CD4-positive, alpha-beta memory T cell (primary cell): ENCODE measurements at regions of chr6 and their contacts with region 1.

Region 1: DNA sequence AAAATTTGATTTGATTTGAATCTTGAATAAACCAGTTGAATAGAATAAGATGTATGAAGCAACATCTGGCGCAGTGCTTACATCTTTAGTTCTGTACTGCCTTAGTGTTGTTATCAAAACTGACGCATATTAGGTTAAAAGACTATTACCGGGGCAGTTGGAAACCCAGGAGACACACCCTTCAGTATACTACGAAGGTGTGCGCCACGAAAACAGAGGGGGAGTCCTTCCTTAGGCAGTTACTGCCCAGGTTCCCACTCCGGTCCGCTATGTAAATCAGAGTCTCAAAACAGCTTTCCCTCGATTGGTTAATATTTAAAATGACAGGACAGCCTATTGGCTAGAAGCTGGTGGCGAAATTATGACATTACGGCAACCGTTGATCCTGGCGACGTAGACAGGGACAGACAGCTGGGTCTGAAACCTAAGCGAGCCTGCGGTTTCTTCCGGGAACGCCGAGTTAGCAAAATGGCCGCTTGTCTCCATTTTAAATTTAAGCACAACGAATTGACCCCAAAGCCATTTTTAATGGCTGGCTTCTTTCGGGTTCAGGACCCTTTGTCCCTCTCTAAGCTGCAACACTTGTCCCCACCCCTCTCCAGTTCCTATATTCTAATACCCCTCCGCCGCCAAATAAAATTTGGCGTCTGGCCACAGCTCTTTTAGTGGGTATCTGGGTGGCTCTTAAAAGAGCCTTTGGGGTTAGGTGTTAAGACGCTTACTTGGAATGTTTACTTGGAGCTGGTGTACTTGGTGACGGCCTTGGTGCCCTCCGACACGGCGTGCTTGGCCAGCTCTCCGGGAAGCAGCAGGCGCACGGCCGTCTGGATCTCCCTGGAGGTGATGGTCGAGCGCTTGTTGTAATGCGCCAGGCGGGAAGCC is 35.8 kb downstream of the HFE start:
- DNase-seq: peak; percentile 94 to 98 (median 98)
- H3K4me3 ChIP-seq: peak overlapping the region; percentile 87 to 98
- H3K4me3 Mint-ChIP-seq: peak overlapping the region; percentile 96 to 100 (median 100)
- H3K27ac ChIP-seq: peak overlapping the region; percentile 89
- H3K27ac Mint-ChIP-seq: peak overlapping the region; percentile 97 to 99 (median 99)
- H3K4me1 ChIP-seq: peaks cover 26% of the 10 kb centered on the region
- H3K4me1 Mint-ChIP-seq: peaks cover 20 to 54% (median 30%) of the 10 kb centered on the region in 4 donors
- H3K27me3 ChIP-seq: no peaks in the 10 kb centered on the region
- H3K27me3 Mint-ChIP-seq: peaks cover 0 to 3% of the 10 kb centered on the region in 2 donors

Region 2: GRCh38 chr6:26065952-26066380 is 57.1 kb before region 1 on chr6:
- CTCF ChIA-PET with region 1: interaction called, 3 read pairs
- POLR2A ChIA-PET with region 1: interaction called, 69 read pairs
- intact Hi-C with region 1: loop called (anchors 2 kb)
- DNase-seq: peak; percentile 70 to 76 (median 71)
- H3K4me3 ChIP-seq: no peak overlapping the region
- H3K4me3 Mint-ChIP-seq: no peak overlapping the region
- H3K27ac ChIP-seq: no peak overlapping the region
- H3K27ac Mint-ChIP-seq: peak overlapping the region in 1 of 7 donors; percentile 30
- H3K4me1 ChIP-seq: no peaks in the 10 kb centered on the region
- H3K4me1 Mint-ChIP-seq: peaks cover 4 to 12% (median 7%) of the 10 kb centered on the region in 4 donors
- H3K27me3 ChIP-seq: no peaks in the 10 kb centered on the region
- H3K27me3 Mint-ChIP-seq: peaks cover 0 to 4% of the 10 kb centered on the region in 2 donors

Region 3: DNA sequence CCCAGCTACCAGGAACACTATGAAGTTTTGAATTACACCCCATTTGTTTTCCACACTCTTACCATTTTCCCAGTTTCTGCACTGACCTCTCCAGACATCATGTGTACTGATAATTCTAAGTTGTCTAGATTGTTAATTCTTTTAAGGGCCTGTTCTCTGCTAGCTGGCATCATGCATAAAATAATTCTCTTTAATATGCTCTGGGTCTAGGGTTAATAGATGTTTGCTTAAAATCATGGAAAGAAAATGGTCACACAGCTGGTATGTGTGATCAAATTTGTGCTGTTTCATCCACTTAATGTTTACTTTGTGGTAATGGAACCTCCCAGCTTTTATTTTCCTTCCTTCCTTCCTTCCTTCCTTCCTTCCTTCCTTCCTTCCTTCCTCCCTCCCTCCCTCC is 13.3 kb after region 1 on chr6:
- CTCF ChIA-PET with region 1: interaction called, 3 read pairs
- POLR2A ChIA-PET with region 1: interaction called, 90 read pairs
- intact Hi-C with region 1: loop called (anchors 1 kb)
- DNase-seq: no peak
- H3K4me3 ChIP-seq: no peak overlapping the region
- H3K4me3 Mint-ChIP-seq: no peak overlapping the region
- H3K27ac ChIP-seq: no peak overlapping the region
- H3K27ac Mint-ChIP-seq: peak overlapping the region in 2 of 7 donors; percentile 0 to 51
- H3K4me1 ChIP-seq: peaks cover 5% of the 10 kb centered on the region
- H3K4me1 Mint-ChIP-seq: peaks cover 20 to 46% (median 28%) of the 10 kb centered on the region in 4 donors
- H3K27me3 ChIP-seq: no peaks in the 10 kb centered on the region
- H3K27me3 Mint-ChIP-seq: no peaks in the 10 kb centered on the region

Region 4: GRCh38 chr6:26196846-26197648 is 74.0 kb after region 1 on chr6:
- CTCF ChIA-PET with region 1: interaction called, 32 read pairs
- POLR2A ChIA-PET with region 1: interaction called, 657 read pairs
- intact Hi-C with region 1: loop called (anchors 1 kb)
- DNase-seq: peak; percentile 92 to 93 (median 92)
- H3K4me3 ChIP-seq: peak overlapping the region; percentile 83 to 97
- H3K4me3 Mint-ChIP-seq: peak overlapping the region; percentile 94 to 99 (median 97)
- H3K27ac ChIP-seq: peak overlapping the region; percentile 84
- H3K27ac Mint-ChIP-seq: peak overlapping the region; percentile 96 to 100 (median 98)
- H3K4me1 ChIP-seq: peaks cover 43% of the 10 kb centered on the region
- H3K4me1 Mint-ChIP-seq: peaks cover 23 to 57% (median 41%) of the 10 kb centered on the region in 4 donors
- H3K27me3 ChIP-seq: no peaks in the 10 kb centered on the region
- H3K27me3 Mint-ChIP-seq: no peaks in the 10 kb centered on the region

Region 5: GRCh38 chr6:26249957-26250697 is 127.1 kb after region 1 on chr6:
- CTCF ChIA-PET with region 1: interaction called, 7 read pairs
- POLR2A ChIA-PET with region 1: interaction called, 94 read pairs
- intact Hi-C with region 1: no loop called
- DNase-seq: peak; percentile 79 to 88 (median 83)
- H3K4me3 ChIP-seq: peak overlapping the region; percentile 86 to 88
- H3K4me3 Mint-ChIP-seq: peak overlapping the region; percentile 92 to 99 (median 98)
- H3K27ac ChIP-seq: peak overlapping the region; percentile 59
- H3K27ac Mint-ChIP-seq: peak overlapping the region; percentile 85 to 97 (median 94)
- H3K4me1 ChIP-seq: peaks cover 25% of the 10 kb centered on the region
- H3K4me1 Mint-ChIP-seq: peaks cover 28 to 53% (median 40%) of the 10 kb centered on the region in 4 donors
- H3K27me3 ChIP-seq: no peaks in the 10 kb centered on the region
- H3K27me3 Mint-ChIP-seq: no peaks in the 10 kb centered on the region

Region 6: DNA sequence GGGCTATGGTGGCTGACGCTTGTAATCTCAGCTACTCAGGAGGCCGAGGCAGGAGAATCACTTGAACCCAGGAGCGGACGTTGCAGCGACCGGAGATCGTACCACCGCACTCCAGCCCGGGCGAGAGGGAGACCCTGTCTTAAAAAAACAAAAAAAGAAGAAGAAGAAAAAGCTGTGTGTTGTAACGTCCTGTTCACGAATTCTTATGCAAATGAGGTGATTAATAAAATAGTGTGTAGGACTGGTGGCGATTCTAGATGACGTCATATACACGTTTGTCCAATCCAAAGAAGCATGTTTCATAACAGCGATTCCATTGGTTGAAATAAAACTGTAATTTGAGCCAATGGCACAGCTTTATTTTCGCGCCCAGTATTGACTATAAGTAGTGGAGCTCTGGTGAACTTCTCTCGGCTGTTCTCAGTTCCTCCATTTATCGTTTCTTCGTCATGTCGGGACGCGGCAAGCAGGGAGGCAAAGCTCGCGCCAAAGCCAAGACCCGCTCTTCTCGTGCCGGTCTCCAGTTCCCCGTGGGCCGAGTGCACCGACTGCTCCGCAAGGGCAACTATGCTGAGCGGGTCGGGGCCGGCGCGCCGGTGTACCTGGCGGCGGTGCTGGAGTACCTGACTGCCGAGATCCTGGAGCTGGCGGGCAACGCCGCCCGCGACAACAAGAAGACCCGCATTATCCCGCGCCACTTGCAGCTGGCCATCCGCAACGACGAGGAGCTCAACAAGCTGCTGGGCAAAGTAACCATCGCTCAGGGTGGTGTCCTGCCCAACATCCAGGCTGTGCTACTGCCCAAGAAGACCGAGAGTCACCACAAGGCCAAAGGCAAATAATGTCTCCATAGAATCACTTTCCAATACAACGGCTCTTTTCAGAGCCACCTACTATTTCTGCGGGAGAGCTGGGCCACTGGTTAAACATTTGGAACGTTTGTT is 1742.1 kb after region 1 on chr6:
- CTCF ChIA-PET with region 1: no interaction called
- POLR2A ChIA-PET with region 1: interaction called, 38 read pairs
- intact Hi-C with region 1: no loop called
- DNase-seq: peak; percentile 86 to 93 (median 91)
- H3K4me3 ChIP-seq: peak overlapping the region; percentile 33 to 69
- H3K4me3 Mint-ChIP-seq: peak overlapping the region; percentile 96 to 99 (median 99)
- H3K27ac ChIP-seq: peak overlapping the region; percentile 62
- H3K27ac Mint-ChIP-seq: peak overlapping the region; percentile 94 to 99 (median 98)
- H3K4me1 ChIP-seq: peaks cover 31% of the 10 kb centered on the region
- H3K4me1 Mint-ChIP-seq: peaks cover 18 to 46% (median 34%) of the 10 kb centered on the region in 4 donors
- H3K27me3 ChIP-seq: no peaks in the 10 kb centered on the region
- H3K27me3 Mint-ChIP-seq: no peaks in the 10 kb centered on the region